Left colon (tissue), 2 donors: ENCODE measurements at regions of chr6 and their contacts with region 1.

Region 1: GRCh38 chr6:2353412-2354137 is 108.2 kb upstream of the GMDS start:
- DNase-seq: peak; percentile 44 to 74
- ATAC-seq: peak; percentile 83

Region 2: DNA sequence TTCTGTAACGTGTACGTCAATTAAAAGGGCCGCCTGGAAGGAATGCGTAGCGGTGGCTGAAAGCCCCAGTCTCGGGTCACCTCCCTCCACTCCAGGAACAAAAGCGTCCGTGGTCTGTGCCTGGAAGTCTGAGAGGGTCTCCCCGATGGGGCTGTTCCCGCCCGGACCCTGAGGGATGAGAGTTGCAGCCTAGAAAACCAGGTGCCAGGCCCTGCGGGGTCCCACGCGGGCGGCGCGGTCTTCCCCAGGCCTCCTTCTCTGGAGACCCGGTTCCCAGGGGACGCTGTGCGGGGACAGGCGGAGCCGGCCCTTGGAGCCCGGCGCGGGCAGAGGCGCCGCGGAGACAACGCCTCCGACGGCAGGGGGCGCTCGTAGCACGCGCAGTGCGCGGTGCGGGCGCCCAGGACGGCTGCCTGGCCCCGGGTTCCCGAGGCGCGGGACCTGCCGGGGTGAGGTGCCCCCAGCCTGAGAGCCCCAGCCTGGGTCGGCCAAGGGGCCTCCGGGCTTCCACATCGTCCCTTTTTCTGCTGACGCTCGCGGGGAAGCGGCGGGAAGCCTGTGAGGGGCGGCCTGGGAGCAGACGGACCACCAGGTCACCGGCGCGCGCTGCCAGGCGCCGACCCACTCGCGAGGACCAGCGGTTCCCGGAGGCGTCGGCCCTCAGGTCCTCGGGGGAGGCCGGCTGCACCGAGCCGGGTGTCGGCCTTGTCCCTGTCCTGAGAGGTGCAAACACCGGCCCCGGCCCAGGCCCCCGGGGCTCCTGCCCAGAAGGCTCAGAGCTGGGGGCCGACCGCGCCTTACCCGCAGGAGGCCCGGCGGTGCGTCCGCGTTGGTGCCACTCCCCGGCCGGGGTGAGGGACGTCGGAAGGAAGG is 749.2 kb before region 1 on chr6:
- intact Hi-C with region 1: loop called (anchors 5 to 10 kb)
- DNase-seq: peak in 1 of 2 donors; percentile 78
- ATAC-seq: peak; percentile 87

Region 3: GRCh38 chr6:2209226-2209809 is 144.3 kb before region 1 on chr6:
- intact Hi-C with region 1: loop called in 1 of 2 experiments (anchors 5 kb)
- DNase-seq: peak; percentile 61 to 75
- ATAC-seq: peak; percentile 98

Region 4: GRCh38 chr6:2460216-2460745 is 106.7 kb after region 1 on chr6:
- intact Hi-C with region 1: no loop called
- DNase-seq: no peak
- ATAC-seq: no peak

Region 5: GRCh38 chr6:2563635-2564034 is 210.1 kb after region 1 on chr6:
- intact Hi-C with region 1: no loop called
- DNase-seq: no peak
- ATAC-seq: no peak